ENCODE measurements at regions of chr3 and their contacts with region 1.

Region 1: GRCh38 chr3:71360764-71361163 is 222.8 kb downstream of the FOXP1 start:
- DNase-seq: no peak
- ATAC-seq: no peak

Region 2: GRCh38 chr3:70789898-70790297 is 570.9 kb before region 1 on chr3:
- intact Hi-C with region 1: loop called (anchors 5 kb)
- DNase-seq: no peak
- ATAC-seq: no peak

Region 3: GRCh38 chr3:71022551-71023335 is 338.0 kb before region 1 on chr3:
- intact Hi-C with region 1: no loop called
- DNase-seq: no peak
- ATAC-seq: peak; percentile 13

Region 4: DNA sequence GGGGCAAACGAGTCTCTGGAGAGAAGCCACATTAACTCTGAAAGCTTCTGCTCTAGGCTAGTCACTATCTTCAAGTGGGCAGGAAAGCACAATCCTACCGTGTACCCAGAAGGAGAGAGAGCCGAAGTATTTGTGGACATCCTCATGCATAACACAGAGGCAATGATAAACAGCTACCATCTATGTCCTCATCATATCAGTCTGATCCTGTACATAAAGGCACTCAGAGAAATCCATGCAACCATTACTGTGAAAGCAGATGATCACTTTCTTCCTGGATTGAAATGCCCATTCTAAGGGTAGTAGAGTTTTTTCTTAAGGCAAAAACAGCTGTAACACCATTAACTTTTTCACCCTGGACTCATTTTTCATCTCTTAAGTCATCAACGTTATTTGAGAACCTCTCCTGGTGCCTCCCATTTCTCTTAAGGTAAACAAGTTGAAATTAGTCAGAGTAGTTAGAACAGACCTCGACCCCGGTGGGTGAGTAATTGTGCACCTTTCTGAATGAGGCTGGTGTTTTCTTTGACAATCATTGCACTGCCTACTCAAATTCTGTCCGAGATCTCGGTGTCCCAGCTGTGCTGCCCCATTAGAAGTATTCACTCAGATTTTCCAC is 1160.0 kb after region 1 on chr3:
- intact Hi-C with region 1: no loop called
- DNase-seq: no peak
- ATAC-seq: no peak